Aorta (tissue), 5 donors: ENCODE measurements at regions of chr16 and their contacts with region 1.

Region 1: DNA sequence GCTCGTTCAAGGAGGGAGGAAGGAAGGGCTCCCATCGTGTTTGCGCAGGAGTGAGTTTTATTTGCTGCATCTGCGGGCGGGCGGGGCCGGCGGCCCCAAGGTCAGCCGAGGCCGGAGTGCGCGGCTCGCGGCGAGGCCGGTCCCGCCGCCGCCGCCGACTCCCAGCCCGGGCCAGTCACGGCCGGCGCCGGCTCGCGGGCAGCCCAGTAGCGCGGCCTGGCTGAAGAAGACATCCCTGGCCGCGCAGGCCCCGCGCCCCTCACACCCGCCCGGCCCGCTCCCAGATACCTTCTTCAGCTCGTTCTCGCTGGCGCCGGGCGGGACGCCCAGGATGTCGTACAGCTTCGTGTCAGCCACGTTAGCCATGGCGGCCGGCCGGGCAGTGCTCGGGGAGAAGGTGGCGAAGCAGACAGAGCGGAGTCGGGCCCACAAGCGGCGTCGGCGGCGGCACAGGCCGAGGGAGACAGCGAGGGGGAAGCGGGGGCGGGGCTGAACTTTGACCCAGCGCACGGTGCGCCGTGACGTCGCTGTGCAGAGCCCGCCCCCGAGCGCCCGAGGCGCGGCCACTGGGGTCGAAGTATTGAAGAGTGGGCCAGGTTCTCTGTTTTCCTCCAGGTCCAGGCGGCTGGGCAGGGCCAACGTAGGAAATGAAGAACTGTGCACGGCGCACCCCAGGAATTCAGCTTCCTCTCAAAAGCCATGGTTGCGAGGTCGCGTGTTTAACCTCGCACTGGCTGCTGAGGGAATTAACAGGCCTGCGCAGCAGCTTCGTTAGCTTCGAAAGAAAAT is at the start of gene DNAJA2:
- DNase-seq: peak; percentile 95 to 98
- ATAC-seq: peak; percentile 100
- H3K4me3 ChIP-seq: peak within 1 kb of the TSS; percentile 86 to 98
- H3K27ac ChIP-seq: peak within 1 kb of the TSS; percentile 76 to 99
- H3K4me1 ChIP-seq: peaks cover 3 to 4% of the 10 kb centered on the region in 2 donors
- H3K27me3 ChIP-seq: no peaks in the 10 kb centered on the region
- total RNA-seq, gene DNAJA2: 45.4 to 45.5 TPM

Region 2: GRCh38 chr16:46689365-46690280 is 283.8 kb before region 1 on chr16 and contains the start of gene ORC6:
- intact Hi-C with region 1: loop called in 1 of 2 experiments (anchors 5 kb)
- DNase-seq: peak; percentile 99
- ATAC-seq: peak; percentile 97
- H3K4me3 ChIP-seq: peak within 1 kb of the TSS; percentile 64 to 85
- H3K27ac ChIP-seq: peak within 1 kb of the TSS in 1 of 2 donors; percentile 96
- H3K4me1 ChIP-seq: peaks cover 0 to 2% of the 10 kb centered on the region in 2 donors
- H3K27me3 ChIP-seq: no peaks in the 10 kb centered on the region
- total RNA-seq, gene ORC6: 1.6 TPM

Region 3: GRCh38 chr16:46883690-46884512 is 89.5 kb before region 1 on chr16 and contains the start of gene GPT2:
- intact Hi-C with region 1: loop called in 1 of 2 experiments (anchors 2 kb)
- DNase-seq: peak; percentile 98 to 100
- ATAC-seq: peak; percentile 99
- H3K4me3 ChIP-seq: peak within 1 kb of the TSS; percentile 69 to 78
- H3K27ac ChIP-seq: no peak within 1 kb of the TSS
- H3K4me1 ChIP-seq: no peaks in the 10 kb centered on the region
- H3K27me3 ChIP-seq: no peaks in the 10 kb centered on the region
- total RNA-seq, gene GPT2: 1.8 to 5.1 TPM

Region 4: DNA sequence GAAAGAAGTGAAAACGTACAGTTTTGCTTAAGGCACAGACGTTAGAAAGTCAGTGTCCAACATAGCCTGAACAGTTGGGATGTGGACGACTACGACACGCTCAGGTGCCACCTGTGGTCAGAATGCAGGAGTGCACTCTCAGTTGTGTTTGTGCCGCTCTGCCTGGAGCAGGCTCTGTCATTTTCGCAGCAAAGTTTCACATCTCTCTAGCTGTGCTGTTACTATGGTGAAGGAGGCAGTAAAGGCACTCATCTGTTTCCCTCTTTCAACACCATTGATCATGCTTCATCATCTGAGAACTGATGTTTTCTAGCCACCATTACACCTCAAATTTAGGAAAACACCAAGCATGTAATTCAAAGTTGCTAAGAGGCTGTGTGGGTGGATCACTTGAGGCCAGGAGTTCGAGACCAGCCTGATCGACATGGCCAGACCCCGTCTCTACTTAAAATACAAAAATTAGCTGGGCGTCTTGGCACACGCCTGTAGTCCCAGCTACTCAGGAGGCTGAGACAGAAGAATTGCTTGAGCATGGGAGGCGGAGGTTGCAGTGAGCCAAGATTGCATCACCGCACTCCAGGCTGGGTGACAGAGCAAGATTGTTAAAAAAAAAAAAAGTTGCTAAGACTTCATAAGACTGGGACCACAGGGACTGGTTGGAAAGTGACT is 45.0 kb after region 1 on chr16:
- intact Hi-C with region 1: no loop called
- DNase-seq: no peak
- ATAC-seq: no peak
- H3K4me3 ChIP-seq: no peak overlapping the region
- H3K27ac ChIP-seq: no peak overlapping the region
- H3K4me1 ChIP-seq: no peaks in the 10 kb centered on the region
- H3K27me3 ChIP-seq: no peaks in the 10 kb centered on the region

Region 5: DNA sequence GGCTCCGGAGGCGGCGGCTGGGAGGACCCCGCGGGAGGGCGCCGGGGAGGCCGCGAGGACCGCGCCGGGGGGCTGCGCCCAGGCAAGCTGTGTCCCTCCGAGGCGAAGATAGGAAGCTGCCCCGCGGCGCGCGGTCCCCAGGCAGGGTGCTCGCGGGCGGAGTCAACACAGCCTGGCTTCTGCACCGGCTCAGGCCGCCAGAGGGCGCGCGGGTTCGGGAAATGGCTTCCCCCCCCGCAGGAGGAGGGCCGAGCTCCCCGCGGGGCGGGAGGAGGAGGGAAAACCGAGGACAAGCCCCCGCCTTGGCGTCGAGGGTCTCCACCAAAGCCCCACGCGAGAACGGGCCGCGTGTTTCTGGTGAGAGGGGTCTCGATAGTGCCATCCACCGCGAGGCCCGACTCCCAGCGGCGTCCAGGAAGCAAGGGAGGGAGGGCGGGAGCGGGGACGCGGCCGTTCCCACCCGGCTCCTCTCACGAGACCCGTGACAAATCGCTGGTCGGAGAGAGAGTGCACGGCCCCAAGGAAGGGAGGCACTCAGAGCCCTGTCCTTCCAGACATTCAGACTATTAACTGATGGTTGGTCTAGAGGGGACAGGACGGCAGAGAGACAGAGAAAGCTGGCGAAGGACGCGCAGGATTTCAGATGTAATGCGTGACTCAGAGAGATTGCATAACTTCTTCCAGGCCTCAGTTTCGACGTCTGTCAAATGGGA is 64.5 kb after region 1 on chr16:
- intact Hi-C with region 1: loop called in 1 of 2 experiments (anchors 10 kb)
- DNase-seq: peak; percentile 93 to 98
- ATAC-seq: peak; percentile 96
- H3K4me3 ChIP-seq: peak overlapping the region; percentile 60 to 86
- H3K27ac ChIP-seq: no peak overlapping the region
- H3K4me1 ChIP-seq: no peaks in the 10 kb centered on the region
- H3K27me3 ChIP-seq: no peaks in the 10 kb centered on the region

Region 6: DNA sequence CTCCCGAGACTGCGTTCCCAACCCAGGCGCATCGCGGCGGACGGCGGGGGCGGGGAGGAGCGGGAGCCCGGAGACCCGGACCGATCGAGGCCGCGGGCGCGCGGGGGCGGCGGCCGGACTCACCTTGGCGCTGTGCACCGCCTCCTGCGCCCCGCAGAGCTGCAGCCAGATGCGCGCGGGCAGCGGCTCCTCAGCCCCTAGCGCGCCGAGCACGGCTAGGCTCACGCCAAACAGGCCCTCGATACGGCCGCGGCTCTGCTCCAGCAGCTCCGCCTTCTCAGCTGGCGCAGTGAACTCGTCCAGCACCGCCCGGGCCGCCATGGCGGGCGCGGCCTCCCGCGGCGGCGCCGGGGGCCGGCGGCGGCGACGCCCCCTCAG is 1636.2 kb after region 1 on chr16:
- intact Hi-C with region 1: loop called in 1 of 2 experiments (anchors 10 kb)
- DNase-seq: peak; percentile 72 to 90
- ATAC-seq: peak; percentile 72
- H3K4me3 ChIP-seq: peak overlapping the region; percentile 86 to 94
- H3K27ac ChIP-seq: peak overlapping the region; percentile 69 to 84
- H3K4me1 ChIP-seq: no peaks in the 10 kb centered on the region
- H3K27me3 ChIP-seq: no peaks in the 10 kb centered on the region